ENCODE measurements at regions of chr13 and their contacts with region 1.

Region 1: GRCh38 chr13:51148952-51149573 is 38.0 kb upstream of the C13orf42 start:
- DNase-seq: peak; percentile 69
- H3K4me3 ChIP-seq: no peak overlapping the region; a peak in 1 of 4 replicates
- H3K27ac ChIP-seq: no peak overlapping the region
- H3K4me1 ChIP-seq: no peaks in the 10 kb centered on the region; a peak in 1 of 4 replicates
- H3K27me3 ChIP-seq: no peaks in the 10 kb centered on the region; the same call in none of the 2 replicates
- CTCF ChIP-seq: peak; percentile 72
- EP300 ChIP-seq: no peak
- RAD21 ChIP-seq: peak; percentile 98

Region 2: GRCh38 chr13:50928659-50929462 is 220.2 kb before region 1 on chr13:
- CTCF ChIA-PET with region 1: no interaction called
- POLR2A ChIA-PET with region 1: no interaction called
- DNase-seq: no peak
- H3K4me3 ChIP-seq: no peak overlapping the region
- H3K27ac ChIP-seq: no peak overlapping the region
- H3K4me1 ChIP-seq: peaks cover 0 to 2% of the 10 kb centered on the region in 2 experiments; a peak in 1 of 4 replicates
- H3K27me3 ChIP-seq: no peaks in the 10 kb centered on the region
- CTCF ChIP-seq: no peak
- EP300 ChIP-seq: no peak
- RAD21 ChIP-seq: no peak

Region 3: DNA sequence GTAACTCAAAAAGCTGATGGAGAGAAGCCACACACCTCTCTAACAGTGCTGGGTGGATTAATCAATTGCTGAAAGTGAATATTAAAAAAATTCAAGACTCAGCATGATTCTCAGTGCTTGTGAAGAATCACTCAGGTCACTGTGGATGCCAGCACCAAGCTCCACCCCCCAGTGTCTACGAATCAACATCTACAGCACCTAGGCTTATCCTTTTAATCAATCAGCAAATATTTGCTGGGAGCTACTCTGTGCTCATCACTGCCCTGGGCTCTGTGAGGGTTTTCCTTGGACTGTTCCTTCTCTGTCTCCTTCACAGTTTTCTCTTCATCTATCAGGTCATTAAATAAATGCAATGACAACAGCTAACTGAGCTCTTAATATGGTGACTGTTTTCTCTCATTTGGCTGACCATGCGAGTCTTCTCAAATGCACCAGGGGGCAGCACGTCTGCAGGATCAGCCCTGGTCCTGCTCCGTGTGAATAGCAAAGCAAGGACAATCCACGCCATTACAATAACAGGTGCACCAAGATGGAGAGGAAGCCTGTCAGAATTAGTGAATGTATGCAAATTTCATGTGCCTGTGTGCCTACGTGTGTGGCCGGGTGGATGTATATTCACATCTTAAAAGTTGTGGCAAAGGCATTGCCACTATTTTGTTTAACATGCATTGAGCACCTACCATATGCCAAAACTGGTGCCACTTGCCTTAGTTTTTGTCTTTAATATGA is 23.4 kb before region 1 on chr13:
- CTCF ChIA-PET with region 1: interaction called, 24 read pairs
- POLR2A ChIA-PET with region 1: no interaction called
- DNase-seq: peak; percentile 73
- H3K4me3 ChIP-seq: no peak overlapping the region; a peak in 1 of 4 replicates
- H3K27ac ChIP-seq: no peak overlapping the region
- H3K4me1 ChIP-seq: no peaks in the 10 kb centered on the region
- H3K27me3 ChIP-seq: 0 out of 2 replicates have a peak, but pooled peaks cover 13% of the 10 kb centered on the region
- CTCF ChIP-seq: peak; percentile 80
- EP300 ChIP-seq: no peak
- RAD21 ChIP-seq: peak; percentile 93

Region 4: DNA sequence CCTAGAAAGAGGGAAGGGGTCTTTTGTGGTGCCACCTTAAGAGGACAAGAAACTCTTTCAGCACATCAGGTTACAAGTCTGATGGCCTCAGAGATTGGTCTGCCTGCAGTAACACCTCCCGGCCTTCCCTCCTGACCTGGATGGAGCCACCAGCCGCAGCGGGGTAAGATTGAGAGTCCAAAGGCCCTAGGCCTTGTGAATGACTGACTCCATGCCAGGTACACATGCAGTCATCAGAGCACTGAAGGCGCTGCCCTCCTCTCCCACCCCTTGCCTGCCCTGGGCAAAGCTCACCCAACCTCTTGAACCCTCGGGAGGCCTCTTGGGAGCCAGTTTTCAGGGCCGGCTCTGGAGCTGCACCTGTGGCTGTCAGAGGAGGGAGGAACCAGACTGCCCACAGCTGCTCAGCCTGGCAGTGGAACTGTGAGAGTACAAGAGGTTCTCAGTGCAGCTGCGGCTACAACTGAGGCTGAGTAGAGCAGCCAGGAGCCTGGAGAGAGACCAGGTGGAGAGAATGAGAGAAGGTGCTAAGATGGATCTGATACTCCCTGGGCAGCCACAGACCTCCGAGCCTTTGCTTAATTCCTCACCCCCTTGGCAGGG is 14.2 kb before region 1 on chr13:
- CTCF ChIA-PET with region 1: interaction called, 10 read pairs
- POLR2A ChIA-PET with region 1: no interaction called
- DNase-seq: no peak
- H3K4me3 ChIP-seq: no peak overlapping the region
- H3K27ac ChIP-seq: no peak overlapping the region
- H3K4me1 ChIP-seq: no peaks in the 10 kb centered on the region
- H3K27me3 ChIP-seq: no peaks in the 10 kb centered on the region
- CTCF ChIP-seq: no peak
- EP300 ChIP-seq: no peak
- RAD21 ChIP-seq: no peak

Region 5: DNA sequence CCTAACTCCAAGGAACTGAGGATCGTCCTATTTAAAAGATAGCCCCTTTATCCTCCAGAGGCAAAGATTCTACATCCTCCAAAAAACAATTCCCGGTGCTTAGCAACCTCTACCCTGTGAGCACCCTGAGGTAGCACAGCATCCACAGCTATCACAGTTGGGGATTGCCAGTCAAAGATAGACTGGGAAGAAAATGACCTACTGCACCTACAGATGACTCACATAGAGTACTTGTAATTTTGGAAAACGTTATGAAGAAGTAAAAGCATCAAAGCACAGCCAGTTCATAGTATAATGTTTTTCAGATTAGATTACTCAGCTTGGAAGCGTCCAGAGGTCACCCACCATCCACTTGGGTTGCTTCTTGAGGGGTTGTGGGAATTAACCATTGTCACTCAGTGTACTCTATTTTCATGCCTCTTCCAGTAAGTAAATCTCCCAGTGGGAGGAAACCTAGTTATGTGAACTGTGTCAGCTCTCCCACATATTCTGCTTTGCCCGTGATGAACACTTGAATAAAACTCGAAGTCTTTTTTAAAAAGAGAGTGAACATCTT is 64.2 kb after region 1 on chr13:
- CTCF ChIA-PET with region 1: interaction called, 12 read pairs
- POLR2A ChIA-PET with region 1: no interaction called
- DNase-seq: no peak
- H3K4me3 ChIP-seq: no peak overlapping the region
- H3K27ac ChIP-seq: no peak overlapping the region
- H3K4me1 ChIP-seq: peaks cover 0 to 2% of the 10 kb centered on the region in 2 experiments; a peak in 2 of 4 replicates
- H3K27me3 ChIP-seq: peaks cover 38% of the 10 kb centered on the region; the same call in 1 of the 2 replicates
- CTCF ChIP-seq: no peak
- EP300 ChIP-seq: no peak
- RAD21 ChIP-seq: no peak

Region 6: DNA sequence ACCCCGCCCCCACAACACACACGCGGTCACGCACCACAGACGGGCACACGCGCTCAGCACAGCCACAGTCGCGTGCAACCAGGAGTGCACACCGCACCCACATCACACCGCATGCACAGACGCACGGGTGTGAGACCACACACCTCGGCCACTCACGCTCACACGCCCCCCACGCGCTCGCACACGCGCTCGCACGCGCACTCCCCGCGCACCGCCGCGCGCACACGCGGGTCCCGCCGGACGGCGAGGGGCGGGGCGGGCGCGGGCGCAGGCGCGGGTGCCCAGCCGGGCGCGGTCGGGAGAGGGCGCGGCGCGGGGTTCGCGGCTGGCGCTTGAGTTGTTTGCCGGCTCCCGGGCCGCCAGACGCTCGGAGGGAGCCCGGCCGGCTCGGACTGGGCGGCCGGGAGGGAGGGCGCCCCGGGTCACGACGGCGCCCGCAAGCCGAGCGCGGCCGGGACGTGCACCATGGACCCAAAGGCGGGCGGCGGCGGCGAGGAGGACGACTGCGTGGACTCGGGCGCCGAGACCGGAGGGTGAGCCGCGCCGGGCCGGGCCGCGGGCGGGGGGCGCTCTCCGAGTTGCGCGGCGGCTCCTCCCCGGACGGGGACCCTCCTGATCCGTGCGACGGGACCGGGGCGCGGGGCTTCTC is 73.1 kb after region 1 on chr13 and contains the start of gene FAM124A:
- CTCF ChIA-PET with region 1: interaction called, 15 read pairs
- POLR2A ChIA-PET with region 1: no interaction called
- DNase-seq: peak; percentile 89
- H3K4me3 ChIP-seq: peak within 1 kb of the TSS; percentile 70 to 79
- H3K27ac ChIP-seq: no peak within 1 kb of the TSS
- H3K4me1 ChIP-seq: peaks cover 0 to 20% of the 10 kb centered on the region in 2 experiments; a peak in 2 of 4 replicates
- H3K27me3 ChIP-seq: 0 out of 2 replicates have a peak, but pooled peaks cover 7% of the 10 kb centered on the region
- CTCF ChIP-seq: no peak
- EP300 ChIP-seq: no peak
- RAD21 ChIP-seq: peak; percentile 15; the same call in 1 of the 2 replicates
- polyA plus RNA-seq, gene FAM124A: 1.5 and 2.0 TPM in 2 replicates

Region 7: DNA sequence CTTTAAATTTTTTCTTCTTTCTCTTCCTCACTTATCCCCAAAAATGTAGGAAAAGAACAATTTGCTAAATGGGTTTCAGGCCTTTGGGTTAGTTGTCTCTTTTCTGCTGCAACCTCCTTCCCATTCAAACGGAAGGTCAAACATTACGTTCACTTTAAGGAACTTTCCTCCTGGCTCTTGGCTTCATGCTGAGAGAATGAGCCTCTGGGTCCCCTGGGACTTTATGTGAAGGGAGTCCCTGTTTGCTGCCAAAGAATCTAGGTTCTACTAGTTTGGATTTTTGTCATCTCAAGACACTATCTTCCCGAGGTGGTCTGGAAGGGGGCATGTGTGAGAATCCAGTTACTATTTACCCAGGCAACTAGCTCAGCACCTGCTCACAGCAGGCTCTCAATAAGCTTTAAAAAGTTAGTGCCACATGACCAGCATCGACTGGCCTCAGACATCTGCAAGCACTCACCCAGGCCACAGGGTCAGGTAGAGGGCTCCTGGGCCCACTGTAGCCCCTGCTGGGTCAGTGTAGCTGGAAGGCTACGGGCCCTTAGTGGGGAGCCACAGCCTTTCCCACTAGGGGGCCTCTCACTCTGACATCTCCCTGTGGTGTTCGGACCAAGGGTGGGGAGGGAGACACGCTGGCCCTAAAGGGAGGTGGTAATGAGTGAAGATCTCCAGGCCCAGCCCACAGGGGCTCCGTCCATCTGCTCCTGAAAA is 113.6 kb after region 1 on chr13:
- CTCF ChIA-PET with region 1: interaction called, 14 read pairs
- POLR2A ChIA-PET with region 1: no interaction called
- DNase-seq: no peak
- H3K4me3 ChIP-seq: no peak overlapping the region
- H3K27ac ChIP-seq: no peak overlapping the region
- H3K4me1 ChIP-seq: peaks cover 0 to 18% of the 10 kb centered on the region in 2 experiments; a peak in 1 of 4 replicates
- H3K27me3 ChIP-seq: no peaks in the 10 kb centered on the region
- CTCF ChIP-seq: no peak
- EP300 ChIP-seq: no peak
- RAD21 ChIP-seq: no peak

Measured in SK-N-SH (cell line).